Heart left ventricle (tissue), 16 donors: ENCODE measurements at regions of chr10 and their contacts with region 1.

Region 1: GRCh38 chr10:71766702-71767419 is 6.5 kb downstream of the VSIR start:
- DNase-seq: peak; percentile 79 to 91 (median 86)
- ATAC-seq: peak; percentile 51 to 67 (median 60)
- H3K4me3 ChIP-seq: peak overlapping the region in 5 of 12 donors; percentile 0 to 24 (median 9)
- H3K27ac ChIP-seq: peak overlapping the region; percentile 22 to 98 (median 97)
- H3K4me1 ChIP-seq: peaks cover 29 to 100% (median 99%) of the 10 kb centered on the region in 12 donors
- H3K27me3 ChIP-seq: no peaks in the 10 kb centered on the region
- CTCF ChIP-seq: no peak
- POLR2A ChIP-seq: no peak

Region 2: DNA sequence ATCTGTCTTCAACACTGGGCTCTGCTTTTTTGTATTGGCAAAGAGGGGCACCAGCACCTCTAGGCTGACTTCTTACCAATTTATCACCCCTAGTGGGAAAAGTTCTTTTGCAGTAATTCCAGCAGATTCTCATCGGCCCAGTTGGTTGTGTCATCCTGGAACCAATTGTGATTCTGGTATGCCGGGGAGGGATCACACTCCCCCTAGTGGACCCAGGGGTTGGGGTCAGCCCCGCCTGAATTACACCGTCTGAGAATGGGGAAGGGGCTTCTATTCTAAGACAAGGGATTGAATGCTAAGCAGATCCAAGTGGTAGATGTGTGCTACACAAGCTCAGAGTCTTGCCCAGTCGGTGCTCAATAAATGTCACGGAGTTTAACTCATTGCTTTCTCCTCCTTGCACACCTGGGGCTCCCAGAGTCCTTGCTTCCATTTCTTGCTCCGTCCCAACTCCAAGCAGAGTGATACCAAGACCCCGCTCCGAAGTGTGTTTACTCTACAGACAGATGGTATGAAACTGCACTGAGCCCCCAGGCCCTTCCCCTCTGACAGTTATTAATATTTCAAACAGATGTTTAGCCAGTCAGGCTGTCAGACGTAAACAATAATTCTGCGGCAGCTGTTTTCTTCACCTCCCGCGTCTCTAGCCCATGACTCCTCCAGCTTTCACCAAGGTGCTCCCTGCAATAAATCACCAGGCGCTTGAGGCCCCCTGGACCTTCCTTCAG is 119.2 kb before region 1 on chr10:
- intact Hi-C with region 1: no loop called
- DNase-seq: no peak
- ATAC-seq: no peak
- H3K4me3 ChIP-seq: no peak overlapping the region
- H3K27ac ChIP-seq: no peak overlapping the region
- H3K4me1 ChIP-seq: peaks cover 0 to 4% (median 0%) of the 10 kb centered on the region in 12 donors
- H3K27me3 ChIP-seq: no peaks in the 10 kb centered on the region
- CTCF ChIP-seq: peak in 11 of 12 donors; percentile 11 to 51 (median 34)
- POLR2A ChIP-seq: no peak

Region 3: DNA sequence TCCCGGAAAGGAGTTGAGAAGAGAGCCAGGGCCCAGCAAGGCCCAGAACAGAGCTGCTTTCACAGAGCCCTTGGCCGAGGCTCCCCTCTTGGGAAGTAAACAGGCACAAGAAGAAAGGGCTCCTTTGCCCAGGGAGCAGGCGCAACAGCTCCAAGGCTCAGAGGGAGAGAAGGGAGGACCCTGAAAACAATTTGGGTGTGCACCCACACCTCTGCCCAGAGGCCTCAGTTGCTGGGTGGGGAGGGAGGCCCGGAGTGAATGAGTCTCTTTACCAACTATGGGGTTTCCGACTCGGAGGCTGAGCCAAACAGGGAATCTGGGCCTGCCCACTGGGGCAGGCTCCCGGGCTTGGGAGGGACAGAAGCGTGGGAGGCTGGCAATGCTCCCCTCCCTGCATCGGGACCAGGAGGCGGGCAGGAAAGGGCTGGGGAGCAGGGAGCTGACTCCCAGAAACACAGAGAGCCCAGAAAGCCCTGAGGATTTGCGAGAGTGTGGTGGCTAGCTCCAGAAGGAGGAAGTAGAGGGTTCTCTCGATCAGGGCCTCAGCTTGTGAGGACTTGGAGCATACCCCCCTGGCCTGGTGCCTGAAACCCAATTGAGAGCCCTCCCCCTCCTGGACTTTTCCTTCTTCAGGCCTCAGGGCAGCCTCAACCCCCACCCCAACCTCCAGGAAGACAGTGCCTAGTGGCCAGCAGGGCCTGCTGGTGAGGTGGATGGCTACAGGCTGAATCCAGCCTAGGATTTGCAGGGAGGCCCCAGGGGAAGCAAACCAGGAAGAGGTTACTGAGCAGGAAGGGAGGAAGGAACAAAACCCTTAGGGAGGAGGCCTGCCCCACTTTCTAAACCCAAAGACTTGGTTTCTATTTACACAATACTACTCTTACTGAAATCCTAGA is 53.5 kb before region 1 on chr10:
- intact Hi-C with region 1: loop called in 7 of 10 experiments (anchors 2 to 5 kb)
- DNase-seq: peak; percentile 84 to 91 (median 88)
- ATAC-seq: peak; percentile 65 to 87 (median 84)
- H3K4me3 ChIP-seq: peak overlapping the region in 3 of 12 donors; percentile 1 to 23 (median 5)
- H3K27ac ChIP-seq: peak overlapping the region; percentile 82 to 96 (median 91)
- H3K4me1 ChIP-seq: peaks cover 8 to 65% (median 46%) of the 10 kb centered on the region in 12 donors
- H3K27me3 ChIP-seq: no peaks in the 10 kb centered on the region
- CTCF ChIP-seq: peak in 4 of 12 donors; percentile 17 to 28 (median 22)
- POLR2A ChIP-seq: peak in 1 of 2 donors; percentile 36

Region 4: GRCh38 chr10:71748671-71749191 is 18.1 kb before region 1 on chr10:
- intact Hi-C with region 1: loop called in 5 of 10 experiments (anchors 1 to 2 kb)
- DNase-seq: peak; percentile 81 to 91 (median 84)
- ATAC-seq: peak; percentile 54 to 75 (median 70)
- H3K4me3 ChIP-seq: peak overlapping the region in 2 of 12 donors; percentile 8 to 10
- H3K27ac ChIP-seq: peak overlapping the region; percentile 76 to 96 (median 86)
- H3K4me1 ChIP-seq: peaks cover 35 to 99% (median 56%) of the 10 kb centered on the region in 12 donors
- H3K27me3 ChIP-seq: no peaks in the 10 kb centered on the region
- CTCF ChIP-seq: peak in 4 of 12 donors; percentile 6 to 25 (median 14)
- POLR2A ChIP-seq: peak in 1 of 2 donors; percentile 22

Region 5: DNA sequence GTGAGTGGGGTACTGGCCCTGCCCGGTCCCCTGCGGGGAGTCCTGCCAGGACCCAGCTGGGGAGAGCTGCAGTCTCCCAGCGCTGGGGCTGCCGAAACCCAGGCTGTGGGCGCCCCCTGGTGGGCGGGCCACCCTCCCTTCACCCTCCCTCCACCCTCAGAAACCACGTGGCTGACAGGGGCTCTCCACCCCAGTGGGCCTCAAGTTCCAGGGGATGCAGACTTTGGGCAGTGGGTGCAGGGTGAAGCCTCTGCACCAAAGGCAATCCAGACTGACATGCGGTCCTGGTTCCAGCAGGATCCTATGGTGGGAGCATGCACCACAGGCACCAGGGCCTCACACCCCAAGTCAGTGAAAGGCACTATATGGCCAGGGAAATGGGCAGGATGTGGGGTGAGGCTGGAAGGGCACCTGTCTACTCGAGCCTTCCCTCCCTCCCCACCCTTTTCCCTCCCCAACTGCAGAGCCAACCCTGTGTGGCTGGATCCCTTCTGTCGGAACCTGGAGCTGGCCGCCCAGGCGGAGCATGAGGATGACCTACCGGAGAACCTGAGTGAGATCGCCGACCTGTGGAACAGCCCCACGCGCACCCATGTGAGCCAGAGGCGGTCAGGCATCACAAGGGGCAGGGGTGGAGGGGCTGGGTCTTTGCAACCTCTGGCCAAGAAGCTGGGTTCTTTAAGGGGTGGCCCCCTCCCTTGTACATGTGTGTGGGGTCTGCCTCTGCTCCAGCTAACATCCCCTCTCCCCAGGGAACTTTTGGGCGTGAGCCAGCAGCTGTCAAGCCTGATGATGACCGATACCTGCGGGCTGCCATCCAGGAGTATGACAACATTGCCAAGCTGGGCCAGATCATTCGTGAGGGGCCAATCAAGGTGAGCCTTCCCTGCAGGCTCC is 45.4 kb after region 1 on chr10:
- intact Hi-C with region 1: no loop called
- DNase-seq: peak; percentile 57 to 87 (median 68)
- ATAC-seq: peak; percentile 66 to 87 (median 84)
- H3K4me3 ChIP-seq: no peak overlapping the region
- H3K27ac ChIP-seq: no peak overlapping the region
- H3K4me1 ChIP-seq: peaks cover 0 to 30% (median 10%) of the 10 kb centered on the region in 12 donors
- H3K27me3 ChIP-seq: peaks cover 0 to 9% (median 0%) of the 10 kb centered on the region in 9 donors
- CTCF ChIP-seq: peak; percentile 54 to 89 (median 84)
- POLR2A ChIP-seq: no peak

Region 6: DNA sequence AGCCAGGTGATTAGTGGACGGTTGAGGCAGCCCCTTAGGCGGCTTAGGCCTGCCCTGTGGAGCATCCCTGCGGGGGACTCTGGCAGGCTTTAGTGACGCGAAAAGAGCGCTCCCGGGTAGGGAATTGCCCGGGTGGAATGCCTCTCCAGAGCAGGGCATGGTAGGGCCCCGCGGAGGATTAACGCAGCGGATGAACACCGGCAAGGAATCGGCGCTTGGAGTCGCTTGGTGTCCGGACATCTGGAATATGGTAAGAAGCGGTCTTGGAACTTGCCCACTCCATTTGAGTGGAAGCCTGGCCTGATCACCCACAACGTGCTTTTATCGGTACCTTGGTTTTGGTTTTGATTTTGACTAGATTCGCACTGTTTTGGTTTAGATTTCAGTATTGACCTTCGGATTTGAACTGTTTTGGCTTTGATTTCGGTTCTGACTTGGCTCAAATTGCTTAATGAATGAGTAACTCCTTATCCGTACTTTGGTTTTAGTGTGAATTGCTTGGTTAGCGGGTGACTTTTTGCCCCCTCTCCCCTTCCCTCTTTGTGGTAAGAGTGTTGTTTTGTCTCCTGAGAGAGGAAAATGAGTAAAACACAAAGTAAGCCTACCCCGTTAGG is 173.1 kb after region 1 on chr10:
- intact Hi-C with region 1: no loop called
- DNase-seq: no peak
- ATAC-seq: no peak
- H3K4me3 ChIP-seq: no peak overlapping the region
- H3K27ac ChIP-seq: no peak overlapping the region
- H3K4me1 ChIP-seq: no peaks in the 10 kb centered on the region
- H3K27me3 ChIP-seq: no peaks in the 10 kb centered on the region
- CTCF ChIP-seq: no peak
- POLR2A ChIP-seq: no peak

Region 7: GRCh38 chr10:72248468-72249151 is 481.7 kb after region 1 on chr10:
- intact Hi-C with region 1: loop called in 1 of 10 experiments (anchors 10 kb)
- DNase-seq: peak; percentile 88 to 91 (median 88)
- ATAC-seq: peak; percentile 87 to 93 (median 90)
- H3K4me3 ChIP-seq: peak overlapping the region in 9 of 12 donors; percentile 6 to 39 (median 16)
- H3K27ac ChIP-seq: peak overlapping the region; percentile 81 to 96 (median 92)
- H3K4me1 ChIP-seq: peaks cover 28 to 100% (median 87%) of the 10 kb centered on the region in 12 donors
- H3K27me3 ChIP-seq: no peaks in the 10 kb centered on the region
- CTCF ChIP-seq: no peak
- POLR2A ChIP-seq: peak in 1 of 2 donors; percentile 23